Mammary epithelial cell (primary cell): ENCODE measurements at regions of chr3 and their contacts with region 1.

Region 1: DNA sequence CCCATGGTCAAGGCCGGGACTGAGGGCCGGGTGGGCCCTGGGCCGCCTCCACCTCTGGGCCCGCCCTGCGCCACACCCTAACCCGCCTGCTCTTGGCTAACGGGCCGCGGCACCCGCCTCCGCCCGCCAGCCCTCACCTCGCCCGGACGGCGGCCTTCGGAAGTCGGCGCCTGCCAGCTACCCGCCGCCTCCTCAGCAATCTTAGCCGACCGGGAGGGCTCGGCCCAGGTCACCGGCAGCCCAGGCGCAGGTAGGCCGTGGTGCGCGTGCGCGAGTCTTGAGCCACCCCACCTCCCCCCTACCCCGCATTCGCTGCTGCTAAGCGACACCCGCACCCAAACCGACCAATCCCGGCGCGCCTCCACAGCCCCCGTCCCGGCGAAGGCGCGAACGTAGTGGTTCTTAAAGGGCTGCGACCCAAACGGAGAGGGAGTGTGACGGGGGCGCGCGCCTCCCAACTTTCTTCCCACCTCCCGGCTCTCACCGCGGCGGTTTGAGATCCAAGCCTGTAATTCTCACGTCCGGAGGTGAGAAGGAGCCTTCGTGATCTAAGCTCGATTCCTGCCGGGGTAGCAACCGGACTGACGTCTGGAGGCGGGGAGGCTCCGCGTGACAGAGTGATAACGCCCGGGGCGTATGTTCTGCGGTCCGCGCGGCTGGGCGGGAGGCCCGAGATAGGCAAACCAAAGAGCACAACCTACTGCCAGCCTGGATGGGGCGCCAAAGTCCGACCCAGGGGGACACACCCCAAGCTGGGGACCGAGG is at the start of gene SEC22C:
- DNase-seq: peak; percentile 95
- H3K4me3 ChIP-seq: peak within 1 kb of the TSS; percentile 80 to 95 (median 87)
- H3K27ac ChIP-seq: peak within 1 kb of the TSS; percentile 82
- H3K4me1 ChIP-seq: peaks cover 8% of the 10 kb centered on the region
- H3K27me3 ChIP-seq: no peaks in the 10 kb centered on the region
- CTCF ChIP-seq: peak in 1 of 2 donors; percentile 48
- total RNA-seq, gene SEC22C: 53.2 to 68.7 TPM

Region 2: DNA sequence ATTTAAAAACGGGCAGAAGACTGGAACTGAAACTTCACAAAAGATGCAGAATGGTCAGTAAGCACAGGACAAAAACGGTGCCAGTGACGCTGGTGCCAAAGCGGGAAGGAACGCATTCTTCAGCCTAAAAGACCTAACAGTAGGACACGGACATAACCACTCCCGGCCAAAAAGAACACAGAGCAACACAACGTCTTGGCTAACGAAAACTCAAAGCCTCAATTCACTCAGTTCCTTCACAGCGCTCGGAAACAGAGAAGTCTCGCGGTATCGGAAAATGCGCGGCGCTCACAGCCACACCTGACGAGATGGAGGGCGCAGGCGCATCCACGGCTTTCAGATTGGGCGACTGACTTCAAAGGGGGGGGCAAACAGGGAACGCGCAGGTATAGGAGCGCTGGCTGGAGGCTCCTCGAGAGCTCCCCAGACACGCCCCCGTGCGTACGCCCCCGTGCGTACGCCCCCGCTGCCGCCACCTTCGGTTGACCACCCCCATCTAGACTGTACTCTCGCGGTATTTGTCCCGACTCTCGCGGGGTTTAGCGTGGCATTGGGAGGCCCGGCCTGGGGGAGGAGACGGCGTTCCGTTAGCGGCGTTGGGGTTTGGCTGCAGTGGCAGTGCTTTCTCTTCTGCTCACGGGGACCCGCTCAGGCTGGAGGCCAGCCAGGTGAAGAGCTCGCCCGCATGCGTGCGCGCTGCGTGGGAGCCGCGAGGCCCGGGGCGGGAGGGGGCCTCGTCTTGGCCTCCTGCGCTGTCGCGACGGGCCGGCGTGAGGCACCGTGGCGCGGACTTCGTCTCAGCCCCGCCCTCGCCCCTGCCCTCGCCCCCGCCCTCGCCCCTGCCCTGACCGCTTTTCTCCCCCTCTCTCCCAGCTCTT is 18.5 kb after region 1 on chr3 and contains the start of gene NKTR:
- CTCF ChIA-PET with region 1: no interaction called
- dilution Hi-C with region 1: no loop called
- in situ Hi-C with region 1: no loop called
- intact Hi-C with region 1: loop called (anchors 1 kb)
- DNase-seq: peak; percentile 100
- H3K4me3 ChIP-seq: peak within 1 kb of the TSS; percentile 91 to 99 (median 98)
- H3K27ac ChIP-seq: peak within 1 kb of the TSS; percentile 75
- H3K4me1 ChIP-seq: peaks cover 14% of the 10 kb centered on the region
- H3K27me3 ChIP-seq: no peaks in the 10 kb centered on the region
- CTCF ChIP-seq: no peak
- total RNA-seq, gene NKTR: 57.2 to 59.3 TPM

Region 3: GRCh38 chr3:42640771-42641370 is 59.0 kb after region 1 on chr3:
- CTCF ChIA-PET with region 1: no interaction called
- dilution Hi-C with region 1: no loop called
- in situ Hi-C with region 1: no loop called
- intact Hi-C with region 1: no loop called
- DNase-seq: peak; percentile 68
- H3K4me3 ChIP-seq: no peak overlapping the region
- H3K27ac ChIP-seq: no peak overlapping the region
- H3K4me1 ChIP-seq: peaks cover 12% of the 10 kb centered on the region
- H3K27me3 ChIP-seq: no peaks in the 10 kb centered on the region
- CTCF ChIP-seq: no peak

Region 4: DNA sequence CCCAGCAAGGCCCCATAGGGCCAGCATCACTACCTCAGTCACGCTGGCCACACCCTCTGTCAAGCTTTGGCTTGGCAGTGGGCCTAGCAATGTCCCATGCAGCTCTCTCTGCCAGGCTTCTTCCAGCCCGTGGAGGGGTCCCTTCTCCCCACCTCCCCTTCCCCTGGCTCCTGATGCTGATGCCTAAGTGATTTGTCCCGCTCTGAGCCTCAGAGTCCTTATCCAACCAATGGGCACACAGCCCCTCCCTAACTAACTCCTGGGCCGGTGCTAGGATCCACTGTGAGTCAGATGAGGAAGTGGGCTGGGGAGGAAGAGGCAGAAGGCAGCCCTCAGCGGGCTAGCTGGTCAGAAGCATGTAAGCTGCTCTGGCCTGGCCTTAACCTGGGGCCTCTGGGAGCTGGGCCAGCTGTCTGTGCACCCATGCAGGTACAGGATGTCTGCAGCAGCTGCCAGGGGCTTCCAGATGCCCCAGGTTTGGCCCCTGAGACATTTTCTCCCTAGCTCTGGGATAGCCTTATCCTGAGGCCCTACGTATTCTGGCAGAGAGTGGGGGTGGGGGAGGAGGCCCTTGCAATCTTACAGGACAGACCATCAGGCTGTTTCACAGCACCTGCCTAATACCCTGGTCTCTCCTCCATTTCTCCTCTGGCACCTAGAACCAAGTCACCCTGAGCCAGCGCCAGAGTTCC is 70.9 kb after region 1 on chr3:
- CTCF ChIA-PET with region 1: no interaction called
- dilution Hi-C with region 1: loop called (anchors 5 kb)
- in situ Hi-C with region 1: no loop called
- intact Hi-C with region 1: no loop called
- DNase-seq: peak; percentile 75
- H3K4me3 ChIP-seq: peak overlapping the region; percentile 5 to 75 (median 59)
- H3K27ac ChIP-seq: no peak overlapping the region
- H3K4me1 ChIP-seq: peaks cover 42% of the 10 kb centered on the region
- H3K27me3 ChIP-seq: no peaks in the 10 kb centered on the region
- CTCF ChIP-seq: no peak

Region 5: GRCh38 chr3:42755681-42756578 is 174.0 kb after region 1 on chr3:
- CTCF ChIA-PET with region 1: no interaction called
- dilution Hi-C with region 1: no loop called
- in situ Hi-C with region 1: loop called in 1 of 2 experiments (anchors 10 kb)
- intact Hi-C with region 1: no loop called
- DNase-seq: peak; percentile 14
- H3K4me3 ChIP-seq: no peak overlapping the region
- H3K27ac ChIP-seq: no peak overlapping the region
- H3K4me1 ChIP-seq: no peaks in the 10 kb centered on the region
- H3K27me3 ChIP-seq: no peaks in the 10 kb centered on the region
- CTCF ChIP-seq: peak; percentile 11 to 32

Region 6: GRCh38 chr3:42906070-42906847 is 324.4 kb after region 1 on chr3 and contains the start of gene ZNF662:
- CTCF ChIA-PET with region 1: no interaction called
- dilution Hi-C with region 1: no loop called
- in situ Hi-C with region 1: no loop called
- intact Hi-C with region 1: no loop called
- DNase-seq: no peak
- H3K4me3 ChIP-seq: peak within 1 kb of the TSS in 2 of 3 experiments; percentile 33 to 41
- H3K27ac ChIP-seq: no peak within 1 kb of the TSS
- H3K4me1 ChIP-seq: peaks cover 5% of the 10 kb centered on the region
- H3K27me3 ChIP-seq: peaks cover 22% of the 10 kb centered on the region
- CTCF ChIP-seq: no peak
- total RNA-seq, gene ZNF662: 0.47 to 3.8 TPM

Region 7: DNA sequence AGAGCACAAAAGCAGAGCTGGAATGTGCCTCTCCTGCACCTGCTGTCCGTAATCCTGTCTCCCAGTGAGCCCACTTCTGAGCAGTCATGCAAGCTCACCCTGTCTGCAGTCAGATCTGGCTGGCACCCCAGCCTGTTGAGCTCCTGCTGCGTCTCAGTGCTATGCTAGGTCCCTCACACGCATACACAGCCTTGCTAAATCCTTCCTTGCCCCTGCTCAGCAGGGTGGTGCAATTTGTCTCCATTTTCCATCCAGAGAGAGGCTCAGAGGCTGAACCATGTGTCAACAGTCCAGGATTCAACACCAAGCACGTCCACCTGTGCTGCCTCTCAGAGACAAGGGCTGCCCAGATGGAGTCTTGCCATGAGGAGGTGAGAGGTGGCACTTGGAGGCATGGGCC is 513.0 kb after region 1 on chr3:
- CTCF ChIA-PET with region 1: no interaction called
- dilution Hi-C with region 1: no loop called
- in situ Hi-C with region 1: no loop called
- intact Hi-C with region 1: loop called (anchors 5 kb)
- DNase-seq: no peak
- H3K4me3 ChIP-seq: no peak overlapping the region
- H3K27ac ChIP-seq: no peak overlapping the region
- H3K4me1 ChIP-seq: no peaks in the 10 kb centered on the region
- H3K27me3 ChIP-seq: no peaks in the 10 kb centered on the region
- CTCF ChIP-seq: no peak